Posterior cingulate gyrus (tissue), 11 donors: ENCODE measurements at regions of chr10 and their contacts with region 1.

Region 1: DNA sequence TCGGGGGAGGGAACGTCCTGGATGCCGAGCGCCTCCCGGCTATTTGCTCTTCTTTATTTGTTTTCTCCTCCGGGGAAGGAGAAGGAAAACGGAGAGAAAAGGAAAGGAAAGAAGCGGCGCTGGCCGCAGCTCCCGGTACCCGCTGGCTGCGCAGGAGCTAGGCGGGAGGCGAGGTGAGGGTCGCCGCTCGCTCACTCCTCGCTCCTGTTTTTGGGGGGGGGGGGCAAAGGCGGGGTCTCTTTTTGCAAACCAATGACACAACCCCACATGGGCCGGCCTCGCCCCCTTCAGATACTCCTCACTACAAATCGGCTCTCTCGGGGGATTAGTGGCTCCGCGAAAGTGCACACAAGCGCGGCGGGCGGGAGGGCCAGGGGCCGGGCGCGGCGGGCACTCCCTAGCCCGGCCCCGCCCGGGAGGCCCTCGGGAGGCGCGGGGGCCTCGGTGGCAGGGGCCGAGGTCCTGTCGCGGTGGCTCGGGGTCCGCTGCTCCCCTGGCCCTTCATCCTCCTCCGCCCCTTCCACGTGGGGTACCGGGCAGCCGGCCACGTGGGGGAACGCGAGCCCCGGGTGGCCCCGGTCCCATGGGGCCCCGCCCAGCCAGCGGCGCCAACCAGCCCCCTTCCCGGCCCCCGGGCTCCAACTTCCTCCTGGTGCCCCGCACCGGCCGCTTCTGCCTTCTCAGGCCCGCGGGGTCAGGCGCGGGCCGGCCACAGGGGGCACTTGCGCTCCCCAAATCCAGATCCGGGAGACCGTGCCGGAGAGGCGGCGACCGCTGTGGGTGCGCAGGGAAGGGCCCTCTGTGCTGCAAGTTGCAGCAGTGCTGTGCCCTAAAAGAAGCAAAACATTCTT is 718 bp upstream of the CTBP2 start:
- DNase-seq: peak in 9 of 10 donors; percentile 53 to 95 (median 65)

Region 2: GRCh38 chr10:124992462-124993344 is 168.4 kb before region 1 on chr10:
- intact Hi-C with region 1: loop called (anchors 5 kb)
- DNase-seq: peak in 7 of 10 donors; percentile 62 to 94 (median 73)